ENCODE measurements at regions of chr20 and their contacts with region 1.

Region 1: DNA sequence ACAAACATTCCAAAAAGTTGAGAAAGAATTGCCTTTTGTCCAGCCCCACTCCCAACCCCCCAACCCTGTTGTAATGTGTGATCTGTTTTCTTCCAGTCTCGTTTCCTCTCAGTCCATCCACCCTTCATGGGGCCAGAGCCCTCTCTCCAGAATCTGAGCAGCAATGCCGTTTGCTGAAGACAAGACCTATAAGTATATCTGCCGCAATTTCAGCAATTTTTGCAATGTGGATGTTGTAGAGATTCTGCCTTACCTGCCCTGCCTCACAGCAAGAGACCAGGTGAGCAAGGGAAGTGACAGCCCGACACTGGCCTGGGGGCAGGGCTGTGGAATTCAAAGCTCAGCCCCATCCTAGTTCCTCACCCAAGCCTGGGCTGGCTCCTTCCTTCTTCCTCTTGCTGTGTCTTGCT is 7.8 kb downstream of the MAVS start:
- H3K4me3 ChIP-seq: no peak overlapping the region
- H3K27ac ChIP-seq: no peak overlapping the region
- H3K4me1 ChIP-seq: no peaks in the 10 kb centered on the region
- CTCF ChIP-seq: no peak

Region 2: DNA sequence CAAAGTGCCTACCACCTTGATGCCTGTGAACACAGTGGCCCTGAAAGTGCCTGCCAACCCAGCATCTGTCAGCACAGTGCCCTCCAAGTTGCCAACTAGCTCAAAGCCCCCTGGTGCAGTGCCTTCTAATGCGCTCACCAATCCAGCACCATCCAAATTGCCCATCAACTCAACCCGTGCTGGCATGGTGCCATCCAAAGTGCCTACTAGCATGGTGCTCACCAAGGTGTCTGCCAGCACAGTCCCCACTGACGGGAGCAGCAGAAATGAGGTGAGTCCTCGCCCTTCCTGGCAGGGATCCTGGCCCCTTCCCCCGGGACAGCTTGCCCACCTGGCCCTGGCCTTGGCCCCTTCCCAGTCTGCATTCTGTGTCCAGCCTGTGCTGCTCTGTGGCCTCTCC is 10.1 kb after region 1 on chr20:
- CTCF ChIA-PET with region 1: interaction called, 26 read pairs
- POLR2A ChIA-PET with region 1: interaction called, 3 read pairs
- H3K4me3 ChIP-seq: no peak overlapping the region
- H3K27ac ChIP-seq: no peak overlapping the region
- H3K4me1 ChIP-seq: no peaks in the 10 kb centered on the region
- CTCF ChIP-seq: no peak